Posterior vena cava (tissue), 2 donors: ENCODE measurements at regions of chr10 and their contacts with region 1.

Region 1: GRCh38 chr10:13776861-13777311 is 190.1 kb downstream of the PRPF18 start:
- DNase-seq: no peak

Region 2: GRCh38 chr10:13659897-13660550 is 116.9 kb before region 1 on chr10:
- intact Hi-C with region 1: loop called (anchors 1 to 2 kb)
- DNase-seq: peak; percentile 93

Region 3: GRCh38 chr10:13732465-13732881 is 44.4 kb before region 1 on chr10:
- intact Hi-C with region 1: loop called in 1 of 2 experiments (anchors 2 kb)
- DNase-seq: no peak